Esophagus muscularis mucosa (tissue), 4 donors: ENCODE measurements at regions of chr10 and their contacts with region 1.

Region 1: GRCh38 chr10:34655286-34656170 is 159.6 kb downstream of the PARD3 start:
- DNase-seq: no peak
- H3K4me3 ChIP-seq: no peak overlapping the region
- H3K27ac ChIP-seq: no peak overlapping the region
- H3K4me1 ChIP-seq: peaks cover 11 to 71% (median 51%) of the 10 kb centered on the region in 4 donors
- H3K27me3 ChIP-seq: no peaks in the 10 kb centered on the region
- CTCF ChIP-seq: peak; percentile 55 to 70 (median 62)
- EP300 ChIP-seq: no peak
- POLR2A ChIP-seq: no peak

Region 2: GRCh38 chr10:34666008-34666705 is 10.6 kb after region 1 on chr10:
- intact Hi-C with region 1: no loop called
- DNase-seq: no peak
- H3K4me3 ChIP-seq: no peak overlapping the region
- H3K27ac ChIP-seq: no peak overlapping the region
- H3K4me1 ChIP-seq: peaks cover 8 to 42% (median 31%) of the 10 kb centered on the region in 4 donors
- H3K27me3 ChIP-seq: no peaks in the 10 kb centered on the region
- CTCF ChIP-seq: peak; percentile 61 to 79 (median 65)
- EP300 ChIP-seq: no peak
- POLR2A ChIP-seq: no peak

Region 3: DNA sequence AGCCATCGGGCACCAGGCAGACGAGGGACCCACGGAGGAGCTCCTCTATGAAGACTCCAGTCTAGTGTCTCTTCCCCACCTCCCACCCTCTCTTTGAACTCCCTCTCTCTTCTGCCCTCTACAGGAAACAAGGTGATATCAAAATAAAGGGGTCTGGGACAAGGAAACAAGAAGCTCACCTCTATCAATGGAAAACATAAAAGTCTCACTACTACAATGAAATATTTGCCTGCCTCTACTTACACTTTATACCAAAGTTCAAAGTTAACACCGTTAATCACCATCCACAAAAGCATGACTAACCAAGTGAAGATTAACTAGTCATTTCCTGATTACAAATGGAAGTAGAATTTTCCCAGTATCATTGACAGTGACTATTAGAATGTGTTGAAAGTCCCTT is 77.4 kb after region 1 on chr10:
- intact Hi-C with region 1: no loop called
- DNase-seq: no peak
- H3K4me3 ChIP-seq: no peak overlapping the region
- H3K27ac ChIP-seq: no peak overlapping the region
- H3K4me1 ChIP-seq: peaks cover 15 to 89% (median 56%) of the 10 kb centered on the region in 4 donors
- H3K27me3 ChIP-seq: no peaks in the 10 kb centered on the region
- CTCF ChIP-seq: no peak
- EP300 ChIP-seq: no peak
- POLR2A ChIP-seq: no peak

Region 4: GRCh38 chr10:34768261-34768971 is 112.9 kb after region 1 on chr10:
- intact Hi-C with region 1: no loop called
- DNase-seq: no peak
- H3K4me3 ChIP-seq: peak overlapping the region in 1 of 4 donors; percentile 21
- H3K27ac ChIP-seq: peak overlapping the region; percentile 47 to 52 (median 50)
- H3K4me1 ChIP-seq: peaks cover 26 to 93% (median 86%) of the 10 kb centered on the region in 4 donors
- H3K27me3 ChIP-seq: no peaks in the 10 kb centered on the region
- CTCF ChIP-seq: no peak
- EP300 ChIP-seq: no peak
- POLR2A ChIP-seq: no peak

Region 5: GRCh38 chr10:35027567-35027966 is 372.0 kb after region 1 on chr10:
- intact Hi-C with region 1: loop called (anchors 5 kb)
- DNase-seq: no peak
- H3K4me3 ChIP-seq: no peak overlapping the region
- H3K27ac ChIP-seq: no peak overlapping the region
- H3K4me1 ChIP-seq: no peaks in the 10 kb centered on the region
- H3K27me3 ChIP-seq: no peaks in the 10 kb centered on the region
- CTCF ChIP-seq: peak; percentile 35 to 48 (median 36)
- EP300 ChIP-seq: no peak
- POLR2A ChIP-seq: no peak

Region 6: GRCh38 chr10:35684586-35684985 is 1029.1 kb after region 1 on chr10:
- intact Hi-C with region 1: no loop called
- DNase-seq: no peak
- H3K4me3 ChIP-seq: no peak overlapping the region
- H3K27ac ChIP-seq: no peak overlapping the region
- H3K4me1 ChIP-seq: no peaks in the 10 kb centered on the region
- H3K27me3 ChIP-seq: peaks cover 0 to 9% (median 0%) of the 10 kb centered on the region in 4 donors
- CTCF ChIP-seq: no peak
- EP300 ChIP-seq: no peak
- POLR2A ChIP-seq: no peak